ENCODE measurements at regions of chr5 and their contacts with region 1.

Region 1: GRCh38 chr5:112976432-112977309 is at the start of gene DCP2:
- DNase-seq: peak; percentile 91 to 97 (median 97)
- H3K4me3 ChIP-seq: peak within 1 kb of the TSS; percentile 74
- H3K4me3 Mint-ChIP-seq: peak within 1 kb of the TSS; percentile 93 to 99 (median 98)
- H3K27ac ChIP-seq: peak within 1 kb of the TSS; percentile 84
- H3K27ac Mint-ChIP-seq: peak within 1 kb of the TSS; percentile 91 to 99 (median 96)
- H3K4me1 ChIP-seq: peaks cover 48% of the 10 kb centered on the region
- H3K4me1 Mint-ChIP-seq: peaks cover 43 to 57% (median 55%) of the 10 kb centered on the region in 3 donors
- H3K27me3 ChIP-seq: no peaks in the 10 kb centered on the region
- H3K27me3 Mint-ChIP-seq: peaks cover 0 to 2% of the 10 kb centered on the region in 2 donors
- total RNA-seq, gene DCP2: 54.5 to 61.5 TPM

Region 2: DNA sequence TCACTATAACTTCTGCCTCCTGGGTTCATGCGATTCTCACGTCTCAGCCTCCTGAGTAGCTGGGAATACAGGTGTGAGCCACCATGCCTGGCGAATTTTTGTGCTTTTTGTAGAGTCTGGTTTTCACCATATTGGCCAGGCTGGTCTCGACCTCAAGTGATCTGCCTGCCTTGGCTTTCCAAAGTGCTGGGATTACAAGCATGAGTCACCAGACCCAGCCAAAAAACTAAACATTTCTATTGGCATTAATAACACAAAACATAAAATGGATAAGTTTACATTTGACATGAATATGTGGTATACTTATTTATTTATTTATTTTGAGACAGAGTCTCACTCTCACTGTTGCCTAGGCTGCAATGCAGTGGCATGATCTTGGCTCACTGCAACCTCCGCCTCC is 41.0 kb before region 1 on chr5:
- CTCF ChIA-PET with region 1: no interaction called
- POLR2A ChIA-PET with region 1: no interaction called
- DNase-seq: no peak
- H3K4me3 ChIP-seq: no peak overlapping the region
- H3K4me3 Mint-ChIP-seq: no peak overlapping the region
- H3K27ac ChIP-seq: no peak overlapping the region
- H3K27ac Mint-ChIP-seq: no peak overlapping the region
- H3K4me1 ChIP-seq: peaks cover 6% of the 10 kb centered on the region
- H3K4me1 Mint-ChIP-seq: peaks cover 11 to 16% (median 13%) of the 10 kb centered on the region in 3 donors
- H3K27me3 ChIP-seq: no peaks in the 10 kb centered on the region
- H3K27me3 Mint-ChIP-seq: no peaks in the 10 kb centered on the region

Region 3: DNA sequence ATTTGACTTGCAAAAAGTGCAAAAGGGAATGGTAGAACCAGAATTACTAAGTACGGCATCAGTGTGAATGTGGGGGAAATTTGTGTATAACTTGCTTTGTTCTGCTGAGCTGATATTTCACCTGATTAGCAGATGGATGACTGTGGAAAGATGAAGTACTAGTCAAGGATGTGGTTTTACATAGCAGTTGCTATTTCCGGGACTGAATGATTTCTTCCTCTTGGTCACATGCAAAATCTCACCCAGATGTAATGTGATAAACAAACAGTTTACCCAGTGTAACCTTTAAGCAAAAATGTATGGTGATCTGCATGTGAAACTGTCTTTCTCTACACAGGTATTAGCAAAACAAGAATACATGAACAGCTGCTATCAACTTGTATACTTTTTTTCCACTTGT is 46.0 kb after region 1 on chr5:
- CTCF ChIA-PET with region 1: interaction called, 3 read pairs
- POLR2A ChIA-PET with region 1: interaction called, 12 read pairs
- DNase-seq: peak in 2 of 5 donors; percentile 61 to 74
- H3K4me3 ChIP-seq: no peak overlapping the region
- H3K4me3 Mint-ChIP-seq: peak overlapping the region; percentile 17 to 71 (median 65)
- H3K27ac ChIP-seq: no peak overlapping the region
- H3K27ac Mint-ChIP-seq: peak overlapping the region; percentile 64 to 92 (median 82)
- H3K4me1 ChIP-seq: peaks cover 61% of the 10 kb centered on the region
- H3K4me1 Mint-ChIP-seq: peaks cover 71 to 78% (median 74%) of the 10 kb centered on the region in 3 donors
- H3K27me3 ChIP-seq: no peaks in the 10 kb centered on the region
- H3K27me3 Mint-ChIP-seq: no peaks in the 10 kb centered on the region

Measured in CD8-positive, alpha-beta memory T cell (primary cell).